HCT116 (cell line): ENCODE measurements at regions of chr17 and their contacts with region 1.

Region 1: DNA sequence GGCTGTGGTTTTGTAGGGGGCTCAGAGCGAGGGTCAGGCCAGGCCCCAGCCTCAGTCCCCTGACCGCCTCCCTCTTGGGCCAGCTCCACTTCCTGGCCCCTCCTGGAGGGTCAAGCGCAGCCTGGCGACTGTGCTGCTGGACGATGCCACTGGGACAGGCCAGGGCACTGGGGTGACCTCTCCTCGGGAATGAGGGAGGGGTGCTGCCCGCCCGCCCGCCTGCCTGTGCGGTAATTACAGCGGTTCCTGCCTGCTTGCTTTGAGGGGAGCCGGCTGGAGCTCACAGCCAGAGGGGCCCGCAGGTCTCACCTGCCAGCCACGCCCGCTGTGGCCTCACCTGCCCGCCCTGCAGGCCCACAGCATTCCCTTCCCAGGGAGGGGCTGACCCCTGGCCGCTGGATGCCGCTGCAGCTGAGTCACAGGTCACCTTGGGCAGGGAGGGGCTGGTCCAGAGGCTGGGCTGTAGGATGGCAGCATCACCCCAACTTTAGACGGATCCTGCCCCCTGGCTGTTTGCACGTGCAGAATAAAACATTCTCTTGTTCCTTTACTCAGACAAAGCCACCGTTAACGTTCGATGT is 76.7 kb upstream of the CBX4 start:
- DNase-seq: peak; percentile 72
- ATAC-seq: peak; percentile 93
- H3K4me3 ChIP-seq: peak overlapping the region in 1 of 2 experiments; percentile 34; a peak in 2 of 4 replicates
- H3K27ac ChIP-seq: peak overlapping the region; percentile 41; the same call in 1 of the 2 replicates
- H3K4me1 ChIP-seq: peaks cover 34 to 40% of the 10 kb centered on the region in 2 experiments
- H3K27me3 ChIP-seq: no peaks in the 10 kb centered on the region
- CTCF ChIP-seq: peak; percentile 40 to 94 (median 68)
- POLR2A ChIP-seq: no peak
- RAD21 ChIP-seq: peak; percentile 99

Region 2: GRCh38 chr17:79715098-79715942 is 200.6 kb before region 1 on chr17:
- CTCF ChIA-PET with region 1: no interaction called
- POLR2A ChIA-PET with region 1: no interaction called
- RAD21 ChIA-PET with region 1: no interaction called
- intact Hi-C with region 1: no loop called
- DNase-seq: no peak
- ATAC-seq: peak; percentile 57
- H3K4me3 ChIP-seq: no peak overlapping the region
- H3K27ac ChIP-seq: no peak overlapping the region
- H3K4me1 ChIP-seq: peaks cover 0 to 6% of the 10 kb centered on the region in 2 experiments; a peak in 1 of 4 replicates
- H3K27me3 ChIP-seq: no peaks in the 10 kb centered on the region
- CTCF ChIP-seq: no peak
- POLR2A ChIP-seq: no peak
- RAD21 ChIP-seq: no peak

Region 3: GRCh38 chr17:79741751-79742588 is 174.0 kb before region 1 on chr17:
- CTCF ChIA-PET with region 1: interaction called, 12 read pairs
- POLR2A ChIA-PET with region 1: no interaction called
- RAD21 ChIA-PET with region 1: no interaction called
- intact Hi-C with region 1: loop called (anchors 2 kb)
- DNase-seq: peak; percentile 46
- ATAC-seq: peak; percentile 87
- H3K4me3 ChIP-seq: peak overlapping the region; percentile 24 to 38
- H3K27ac ChIP-seq: no peak overlapping the region
- H3K4me1 ChIP-seq: peaks cover 11 to 33% of the 10 kb centered on the region in 2 experiments; a peak in 3 of 4 replicates
- H3K27me3 ChIP-seq: 0 out of 2 replicates have a peak, but pooled peaks cover 3% of the 10 kb centered on the region
- CTCF ChIP-seq: peak; percentile 89 to 99 (median 99)
- POLR2A ChIP-seq: no peak
- RAD21 ChIP-seq: peak; percentile 84

Region 4: DNA sequence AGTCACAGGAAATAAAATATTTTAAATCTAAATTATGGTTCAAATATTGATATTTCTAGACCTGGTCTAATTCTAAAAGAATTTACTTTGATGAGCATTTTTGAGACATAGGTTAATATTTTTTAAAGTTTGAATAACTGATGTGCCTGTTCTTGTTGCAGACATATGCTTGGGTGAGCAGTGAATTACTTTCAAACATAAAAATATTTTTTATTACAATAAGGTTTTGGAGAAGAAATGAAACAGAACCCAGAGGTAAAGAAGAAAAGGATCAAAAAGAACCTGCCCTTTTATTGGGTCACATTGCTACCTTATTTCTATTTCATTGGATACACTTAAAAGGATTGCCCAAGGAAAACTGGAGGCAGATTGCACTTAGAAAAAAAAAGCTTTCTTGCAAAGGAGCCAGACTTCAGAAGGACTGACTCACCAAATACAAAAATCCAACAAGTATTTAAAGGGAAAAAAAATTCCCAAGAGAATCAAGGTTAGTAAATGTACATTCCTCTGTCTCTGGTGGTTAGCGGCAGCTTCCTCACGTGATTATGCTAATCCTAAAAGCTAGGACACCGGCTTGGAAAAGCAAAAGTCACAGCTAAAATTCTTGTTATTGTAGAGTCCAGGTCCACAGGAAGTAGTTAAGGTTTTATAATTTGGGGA is 166.7 kb before region 1 on chr17:
- CTCF ChIA-PET with region 1: interaction called, 12 read pairs
- POLR2A ChIA-PET with region 1: no interaction called
- RAD21 ChIA-PET with region 1: no interaction called
- intact Hi-C with region 1: no loop called
- DNase-seq: no peak
- ATAC-seq: no peak
- H3K4me3 ChIP-seq: no peak overlapping the region
- H3K27ac ChIP-seq: no peak overlapping the region
- H3K4me1 ChIP-seq: peaks cover 11 to 32% of the 10 kb centered on the region in 2 experiments; a peak in 3 of 4 replicates
- H3K27me3 ChIP-seq: no peaks in the 10 kb centered on the region
- CTCF ChIP-seq: no peak
- POLR2A ChIP-seq: no peak
- RAD21 ChIP-seq: no peak

Region 5: DNA sequence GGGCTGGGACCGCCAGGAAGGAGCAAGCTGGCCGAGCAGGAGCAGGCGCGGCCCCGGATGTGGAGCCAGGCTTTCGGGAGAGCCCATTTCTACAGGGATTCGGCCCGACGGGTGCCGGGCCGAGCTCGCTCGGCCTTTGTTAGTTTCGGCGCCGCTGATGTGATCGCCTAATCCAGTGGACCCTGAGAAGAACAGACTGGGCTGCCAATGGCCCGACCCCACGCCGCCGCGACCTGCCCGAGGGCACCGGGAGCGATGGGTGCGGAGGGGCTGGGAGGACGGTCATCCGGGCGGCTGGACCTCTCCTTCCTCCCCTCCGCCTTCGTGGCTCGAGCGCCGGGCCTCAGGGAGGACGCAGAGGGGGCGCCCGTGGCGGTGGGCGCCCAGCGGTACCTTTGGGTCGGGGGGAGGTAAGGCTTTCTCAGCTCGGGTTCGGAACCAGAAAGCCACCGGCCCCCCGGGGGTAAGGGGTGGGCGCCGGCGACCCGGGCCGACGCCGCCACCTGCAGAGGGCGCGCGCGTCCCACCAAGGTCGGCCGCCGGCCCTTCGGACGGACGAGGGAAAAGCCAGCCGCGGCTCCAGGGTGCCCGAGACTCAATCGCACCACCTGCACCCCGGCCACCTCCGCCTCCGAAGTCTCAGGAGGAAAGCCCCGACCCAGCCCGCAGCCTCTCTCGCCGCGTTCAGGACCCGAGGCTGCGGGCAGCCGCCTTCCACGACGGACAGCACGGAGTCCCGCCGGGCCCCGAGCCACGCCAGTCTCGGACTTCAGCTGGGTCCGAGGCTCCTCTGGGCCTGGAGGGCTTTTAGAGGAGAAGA is 126.2 kb before region 1 on chr17:
- CTCF ChIA-PET with region 1: interaction called, 7 read pairs
- POLR2A ChIA-PET with region 1: no interaction called
- RAD21 ChIA-PET with region 1: interaction called, 3 to 5 read pairs
- intact Hi-C with region 1: loop called (anchors 1 kb)
- DNase-seq: no peak
- ATAC-seq: peak; percentile 80
- H3K4me3 ChIP-seq: no peak overlapping the region
- H3K27ac ChIP-seq: no peak overlapping the region; the same call in 1 of the 2 replicates
- H3K4me1 ChIP-seq: peaks cover 19 to 31% of the 10 kb centered on the region in 2 experiments
- H3K27me3 ChIP-seq: no peaks in the 10 kb centered on the region
- CTCF ChIP-seq: peak; percentile 89 to 95 (median 92)
- POLR2A ChIP-seq: no peak
- RAD21 ChIP-seq: peak; percentile 97; the same call in 1 of the 2 replicates

Region 6: GRCh38 chr17:79810130-79811010 is 105.6 kb before region 1 on chr17:
- CTCF ChIA-PET with region 1: interaction called, 24 read pairs
- POLR2A ChIA-PET with region 1: no interaction called
- RAD21 ChIA-PET with region 1: no interaction called
- intact Hi-C with region 1: loop called (anchors 5 kb)
- DNase-seq: peak; percentile 70
- ATAC-seq: peak; percentile 89
- H3K4me3 ChIP-seq: peak overlapping the region; percentile 28 to 53
- H3K27ac ChIP-seq: no peak overlapping the region
- H3K4me1 ChIP-seq: peaks cover 25 to 44% of the 10 kb centered on the region in 2 experiments
- H3K27me3 ChIP-seq: peaks cover 6% of the 10 kb centered on the region; the same call in 1 of the 2 replicates
- CTCF ChIP-seq: no peak
- POLR2A ChIP-seq: no peak
- RAD21 ChIP-seq: no peak

Region 7: GRCh38 chr17:79850571-79851461 is 65.1 kb before region 1 on chr17:
- CTCF ChIA-PET with region 1: no interaction called
- POLR2A ChIA-PET with region 1: interaction called, 3 read pairs
- RAD21 ChIA-PET with region 1: interaction called in 1 of 2 experiments, 3 read pairs
- intact Hi-C with region 1: loop called (anchors 2 kb)
- DNase-seq: peak; percentile 91
- ATAC-seq: peak; percentile 84
- H3K4me3 ChIP-seq: peak overlapping the region in 1 of 2 experiments; percentile 16; a peak in 2 of 4 replicates
- H3K27ac ChIP-seq: peak overlapping the region; percentile 69
- H3K4me1 ChIP-seq: peaks cover 41 to 47% of the 10 kb centered on the region in 2 experiments
- H3K27me3 ChIP-seq: no peaks in the 10 kb centered on the region
- CTCF ChIP-seq: no peak
- POLR2A ChIP-seq: no peak
- RAD21 ChIP-seq: no peak

Region 8: DNA sequence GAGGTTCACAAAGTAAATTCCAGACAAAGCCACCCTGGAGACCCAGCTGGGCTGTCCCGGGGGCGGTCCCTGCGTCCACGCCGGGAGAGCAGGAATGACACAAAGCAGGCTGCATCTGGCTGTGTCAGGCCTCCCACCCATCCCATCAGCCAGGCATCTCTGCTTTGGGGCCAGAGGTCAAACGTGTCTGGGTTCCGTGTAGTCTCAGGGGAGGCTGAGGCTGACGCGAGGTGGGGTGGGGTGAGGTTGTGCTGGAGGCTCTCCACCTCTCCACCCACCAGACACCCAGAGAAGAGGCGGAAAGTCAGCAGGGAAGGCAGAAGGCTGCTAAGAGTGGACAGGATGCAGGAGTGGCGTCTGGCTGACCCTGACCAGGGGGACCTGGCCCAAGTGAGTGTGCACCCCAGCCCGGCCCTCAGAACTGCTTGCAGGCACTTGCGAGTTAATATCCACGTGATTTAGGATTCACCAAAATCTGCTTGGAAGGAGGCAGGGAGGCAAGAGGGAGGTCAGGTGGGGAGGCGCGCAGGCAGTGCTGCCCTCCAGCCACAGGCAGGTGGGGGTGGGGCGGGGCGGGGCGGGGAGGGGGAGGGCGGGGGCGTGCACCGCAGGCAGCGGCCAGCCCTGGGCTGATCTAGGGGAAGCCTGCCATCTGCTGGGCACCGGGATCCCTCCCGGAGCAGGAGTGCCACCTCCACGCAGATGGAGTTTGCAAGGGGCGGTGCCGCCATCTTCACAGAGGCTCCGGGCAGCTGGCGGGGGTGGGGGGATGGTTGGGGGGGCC is 75.4 kb after region 1 on chr17:
- CTCF ChIA-PET with region 1: no interaction called
- POLR2A ChIA-PET with region 1: no interaction called
- RAD21 ChIA-PET with region 1: no interaction called
- intact Hi-C with region 1: loop called (anchors 5 kb)
- DNase-seq: peak; percentile 68
- ATAC-seq: peak; percentile 89
- H3K4me3 ChIP-seq: no peak overlapping the region
- H3K27ac ChIP-seq: peak overlapping the region; percentile 37; the same call in 1 of the 2 replicates
- H3K4me1 ChIP-seq: peaks cover 51 to 57% of the 10 kb centered on the region in 2 experiments
- H3K27me3 ChIP-seq: no peaks in the 10 kb centered on the region
- CTCF ChIP-seq: peak in 2 of 3 experiments; percentile 44 to 71; a peak in 5 of 6 replicates
- POLR2A ChIP-seq: no peak
- RAD21 ChIP-seq: peak; percentile 82